Activated CD4-positive, alpha-beta memory T cell treated with anti-CD3 and anti-CD28 coated beads for 36 hours (primary cell): ENCODE measurements at regions of chr17 and their contacts with region 1.

Region 1: GRCh38 chr17:41648411-41649195 is 24.2 kb upstream of the KRT17 start:
- DNase-seq: peak; percentile 87
- H3K4me3 Mint-ChIP-seq: peak overlapping the region; percentile 42
- H3K27ac Mint-ChIP-seq: no peak overlapping the region
- H3K4me1 Mint-ChIP-seq: peaks cover 11% of the 10 kb centered on the region
- H3K27me3 Mint-ChIP-seq: no peaks in the 10 kb centered on the region

Region 2: GRCh38 chr17:40803617-40804082 is 845.0 kb before region 1 on chr17:
- CTCF ChIA-PET with region 1: interaction called, 7 read pairs
- POLR2A ChIA-PET with region 1: no interaction called
- intact Hi-C with region 1: loop called (anchors 5 kb)
- DNase-seq: peak; percentile 86
- H3K4me3 Mint-ChIP-seq: no peak overlapping the region
- H3K27ac Mint-ChIP-seq: no peak overlapping the region
- H3K4me1 Mint-ChIP-seq: peaks cover 2% of the 10 kb centered on the region
- H3K27me3 Mint-ChIP-seq: peaks cover 36% of the 10 kb centered on the region

Region 3: DNA sequence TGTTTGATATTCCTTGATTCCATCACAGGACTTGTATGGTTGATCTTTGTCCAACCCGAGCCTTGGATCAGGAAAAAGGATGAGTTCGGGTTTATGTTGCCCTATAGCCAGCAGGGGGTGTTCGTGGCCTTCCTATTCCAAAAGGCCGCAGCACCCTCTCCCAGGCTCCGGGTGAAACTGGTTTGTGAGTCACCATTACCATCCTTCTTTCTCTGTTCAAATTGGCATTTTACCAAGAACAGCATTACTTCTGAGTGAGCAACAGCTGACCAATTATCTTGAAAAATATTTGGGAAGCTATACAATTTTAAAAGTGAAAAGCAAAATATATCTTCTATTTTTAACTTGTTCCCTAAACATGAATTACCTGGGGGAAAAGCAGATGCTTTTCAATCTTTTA is 739.3 kb before region 1 on chr17:
- CTCF ChIA-PET with region 1: interaction called, 14 read pairs
- POLR2A ChIA-PET with region 1: no interaction called
- intact Hi-C with region 1: loop called (anchors 1 kb)
- DNase-seq: peak; percentile 71
- H3K4me3 Mint-ChIP-seq: no peak overlapping the region
- H3K27ac Mint-ChIP-seq: no peak overlapping the region
- H3K4me1 Mint-ChIP-seq: no peaks in the 10 kb centered on the region
- H3K27me3 Mint-ChIP-seq: peaks cover 24% of the 10 kb centered on the region

Region 4: GRCh38 chr17:41588126-41588810 is 60.3 kb before region 1 on chr17:
- CTCF ChIA-PET with region 1: interaction called, 11 read pairs
- POLR2A ChIA-PET with region 1: no interaction called
- intact Hi-C with region 1: no loop called
- DNase-seq: no peak
- H3K4me3 Mint-ChIP-seq: no peak overlapping the region
- H3K27ac Mint-ChIP-seq: no peak overlapping the region
- H3K4me1 Mint-ChIP-seq: no peaks in the 10 kb centered on the region
- H3K27me3 Mint-ChIP-seq: peaks cover 10% of the 10 kb centered on the region

Region 5: GRCh38 chr17:41678907-41679739 is 30.5 kb after region 1 on chr17:
- CTCF ChIA-PET with region 1: interaction called, 12 read pairs
- POLR2A ChIA-PET with region 1: no interaction called
- intact Hi-C with region 1: no loop called
- DNase-seq: peak; percentile 81
- H3K4me3 Mint-ChIP-seq: peak overlapping the region; percentile 79
- H3K27ac Mint-ChIP-seq: peak overlapping the region; percentile 97
- H3K4me1 Mint-ChIP-seq: peaks cover 41% of the 10 kb centered on the region
- H3K27me3 Mint-ChIP-seq: no peaks in the 10 kb centered on the region